Thyroid gland (tissue), 4 donors: ENCODE measurements at regions of chr2 and their contacts with region 1.

Region 1: GRCh38 chr2:160984426-160985077 is 175.7 kb upstream of the TANK start:
- DNase-seq: peak; percentile 27 to 54
- H3K4me3 ChIP-seq: no peak overlapping the region
- H3K27ac ChIP-seq: no peak overlapping the region
- H3K4me1 ChIP-seq: peaks cover 0 to 4% of the 10 kb centered on the region in 2 donors
- H3K27me3 ChIP-seq: no peaks in the 10 kb centered on the region
- CTCF ChIP-seq: no peak
- POLR2A ChIP-seq: no peak

Region 2: GRCh38 chr2:160324161-160324800 is 660.3 kb before region 1 on chr2:
- intact Hi-C with region 1: loop called (anchors 10 kb)
- DNase-seq: peak; percentile 65 to 68
- H3K4me3 ChIP-seq: no peak overlapping the region
- H3K27ac ChIP-seq: no peak overlapping the region
- H3K4me1 ChIP-seq: peaks cover 13 to 22% of the 10 kb centered on the region in 2 donors
- H3K27me3 ChIP-seq: no peaks in the 10 kb centered on the region
- CTCF ChIP-seq: peak; percentile 23 to 78 (median 68)
- POLR2A ChIP-seq: no peak